Activated B cell treated with CpG ODN at 0.5 μM for 24 hours (primary cell): ENCODE measurements at regions of chr4 and their contacts with region 1.

Region 1: GRCh38 chr4:98928505-98929340 is at the start of gene EIF4E:
- DNase-seq: peak; percentile 83
- ATAC-seq: peak; percentile 74
- H3K4me3 Mint-ChIP-seq: peak within 1 kb of the TSS; percentile 96
- H3K27ac Mint-ChIP-seq: peak within 1 kb of the TSS; percentile 98
- H3K4me1 Mint-ChIP-seq: peaks cover 59% of the 10 kb centered on the region
- H3K27me3 Mint-ChIP-seq: no peaks in the 10 kb centered on the region
- CTCF ChIP-seq: no peak
- total RNA-seq, gene EIF4E: 87.3 and 90.5 TPM in 2 replicates

Region 2: DNA sequence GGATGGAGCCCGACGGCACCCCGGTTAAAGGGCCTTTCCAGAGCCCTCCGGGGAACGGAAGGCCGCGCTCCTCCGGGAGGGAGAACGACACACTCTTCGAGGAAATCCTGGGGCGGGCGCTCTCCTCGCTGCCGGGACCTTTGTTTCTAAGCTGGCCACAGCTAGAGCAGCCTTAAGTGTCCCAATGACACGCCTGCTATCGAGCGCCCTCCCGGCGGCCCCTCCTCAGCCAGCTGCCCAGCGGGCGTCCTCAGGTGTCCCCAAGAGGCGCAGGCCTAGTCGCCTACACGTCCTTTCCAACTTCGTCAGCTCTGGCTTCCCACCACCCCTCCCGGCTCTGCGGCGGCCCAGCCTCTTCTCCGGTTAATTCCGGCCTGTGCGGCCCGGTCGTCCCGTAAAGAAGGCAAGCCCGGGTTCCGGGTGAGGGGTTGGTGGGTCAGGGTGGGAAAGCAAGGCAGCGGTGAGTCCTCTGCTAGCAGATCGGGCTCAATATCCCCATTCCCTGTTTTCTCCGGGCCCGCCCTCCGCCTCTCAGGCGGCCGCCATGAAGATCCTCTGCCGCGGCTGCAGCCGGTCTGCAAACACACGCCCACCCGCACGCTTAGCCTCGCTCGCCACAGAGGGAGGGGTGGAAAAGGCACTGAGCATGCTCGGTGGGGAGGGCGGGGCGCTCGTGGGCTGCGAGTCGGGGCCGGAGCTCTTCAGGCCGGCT is 668.0 kb before region 1 on chr4:
- CTCF ChIA-PET with region 1: no interaction called
- POLR2A ChIA-PET with region 1: interaction called, 31 read pairs
- intact Hi-C with region 1: loop called (anchors 1 kb)
- DNase-seq: peak; percentile 89
- ATAC-seq: peak; percentile 93
- H3K4me3 Mint-ChIP-seq: peak overlapping the region; percentile 95
- H3K27ac Mint-ChIP-seq: peak overlapping the region; percentile 94
- H3K4me1 Mint-ChIP-seq: peaks cover 48% of the 10 kb centered on the region
- H3K27me3 Mint-ChIP-seq: no peaks in the 10 kb centered on the region
- CTCF ChIP-seq: no peak

Region 3: DNA sequence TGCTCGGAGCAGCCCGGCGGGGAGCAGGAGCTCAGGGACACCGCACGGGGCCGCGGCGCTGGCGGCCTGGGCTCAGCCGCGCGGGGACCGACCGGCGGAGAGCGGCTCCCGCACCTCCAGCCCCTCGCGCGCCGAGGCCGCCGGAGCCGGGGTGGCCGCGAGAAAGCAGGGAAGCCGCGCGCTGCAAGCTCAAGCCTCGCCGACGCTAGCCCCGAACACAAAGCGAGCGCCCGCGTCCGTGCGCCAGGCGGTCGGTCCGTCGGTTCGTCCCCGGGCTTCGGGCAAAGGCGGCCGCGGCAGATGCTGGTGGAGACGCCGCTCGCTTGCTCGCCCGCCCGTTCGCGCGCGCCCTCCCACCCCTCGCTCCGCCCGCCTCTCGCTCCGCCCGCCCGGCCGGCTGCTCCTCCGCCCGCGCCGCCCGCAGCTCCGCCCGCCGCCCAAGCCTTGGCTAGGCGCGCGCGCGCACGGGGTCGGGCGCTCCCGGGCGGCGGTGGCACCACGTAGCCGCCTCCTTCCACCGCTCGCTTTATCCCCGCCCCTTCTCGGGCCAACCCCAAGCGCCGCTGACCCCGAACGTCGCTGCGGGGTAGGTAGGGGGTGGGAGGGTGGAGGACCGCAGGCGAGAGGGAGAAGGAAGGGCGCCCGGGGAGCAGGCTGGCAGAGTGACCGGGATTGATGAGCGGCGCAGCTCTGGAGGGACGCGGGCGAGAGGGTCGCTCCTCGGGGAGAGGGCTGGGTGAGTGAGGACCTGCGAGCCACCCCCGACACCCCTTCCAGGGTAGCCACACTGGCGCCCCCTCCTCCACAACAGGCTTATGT is 270.2 kb before region 1 on chr4 and contains the start of gene TSPAN5:
- CTCF ChIA-PET with region 1: interaction called, 3 read pairs
- POLR2A ChIA-PET with region 1: interaction called, 12 read pairs
- intact Hi-C with region 1: loop called (anchors 1 kb)
- DNase-seq: peak; percentile 78
- ATAC-seq: peak; percentile 86
- H3K4me3 Mint-ChIP-seq: peak within 1 kb of the TSS; percentile 92
- H3K27ac Mint-ChIP-seq: peak within 1 kb of the TSS; percentile 68
- H3K4me1 Mint-ChIP-seq: peaks cover 51% of the 10 kb centered on the region
- H3K27me3 Mint-ChIP-seq: peaks cover 7% of the 10 kb centered on the region
- CTCF ChIP-seq: no peak
- total RNA-seq, gene TSPAN5: 1.6 and 2.7 TPM in 2 replicates

Region 4: GRCh38 chr4:99054428-99054994 is 125.8 kb after region 1 on chr4:
- CTCF ChIA-PET with region 1: interaction called, 4 read pairs
- POLR2A ChIA-PET with region 1: no interaction called
- intact Hi-C with region 1: loop called (anchors 2 kb)
- DNase-seq: no peak
- ATAC-seq: no peak
- H3K4me3 Mint-ChIP-seq: no peak overlapping the region
- H3K27ac Mint-ChIP-seq: no peak overlapping the region
- H3K4me1 Mint-ChIP-seq: peaks cover 9% of the 10 kb centered on the region
- H3K27me3 Mint-ChIP-seq: no peaks in the 10 kb centered on the region
- CTCF ChIP-seq: no peak

Region 5: DNA sequence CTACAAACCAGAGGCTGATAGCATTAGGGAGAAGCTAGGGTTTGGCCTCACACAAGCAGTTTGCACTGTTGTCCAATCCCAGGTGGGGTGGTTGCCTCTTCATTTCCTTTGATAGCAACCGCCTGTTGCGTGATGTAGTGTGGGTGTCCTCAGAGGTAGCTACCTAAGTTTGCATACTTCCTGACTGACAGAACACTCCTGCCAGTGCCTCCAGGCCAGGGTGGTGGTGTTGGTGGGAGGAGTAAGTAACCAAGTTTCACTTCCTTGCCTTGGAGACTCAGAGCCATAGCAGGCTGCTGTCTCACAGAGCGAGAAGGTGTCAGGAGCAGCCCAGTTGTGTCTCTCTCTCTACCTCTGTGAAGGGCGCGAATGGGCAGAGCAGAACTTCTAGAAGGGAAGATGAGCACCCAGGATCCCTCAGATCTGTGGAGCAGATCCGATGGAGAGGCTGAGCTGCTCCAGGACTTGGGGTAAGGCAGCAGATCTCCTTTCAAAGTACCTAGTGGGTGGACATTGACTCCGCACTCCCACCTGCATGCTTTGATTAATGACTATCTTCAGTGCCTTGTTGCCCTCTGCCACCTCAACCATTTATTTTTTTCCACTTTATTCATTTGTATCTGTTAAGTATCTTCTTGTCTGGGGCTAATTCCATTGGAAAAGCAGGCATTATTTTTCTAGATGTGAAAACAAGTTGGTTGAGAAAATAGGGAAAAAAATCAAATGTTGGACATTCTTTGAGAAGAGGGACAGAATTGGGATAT is 888.0 kb after region 1 on chr4 and contains the start of gene DAPP1:
- CTCF ChIA-PET with region 1: no interaction called
- POLR2A ChIA-PET with region 1: interaction called, 5 read pairs
- intact Hi-C with region 1: loop called (anchors 1 kb)
- DNase-seq: peak; percentile 64
- ATAC-seq: peak; percentile 92
- H3K4me3 Mint-ChIP-seq: peak within 1 kb of the TSS; percentile 89
- H3K27ac Mint-ChIP-seq: peak within 1 kb of the TSS; percentile 88
- H3K4me1 Mint-ChIP-seq: peaks cover 75% of the 10 kb centered on the region
- H3K27me3 Mint-ChIP-seq: no peaks in the 10 kb centered on the region
- CTCF ChIP-seq: no peak
- total RNA-seq, gene DAPP1: 137 and 144 TPM in 2 replicates